BJ (cell line): ENCODE measurements at regions of chrX and their contacts with region 1.

Region 1: DNA sequence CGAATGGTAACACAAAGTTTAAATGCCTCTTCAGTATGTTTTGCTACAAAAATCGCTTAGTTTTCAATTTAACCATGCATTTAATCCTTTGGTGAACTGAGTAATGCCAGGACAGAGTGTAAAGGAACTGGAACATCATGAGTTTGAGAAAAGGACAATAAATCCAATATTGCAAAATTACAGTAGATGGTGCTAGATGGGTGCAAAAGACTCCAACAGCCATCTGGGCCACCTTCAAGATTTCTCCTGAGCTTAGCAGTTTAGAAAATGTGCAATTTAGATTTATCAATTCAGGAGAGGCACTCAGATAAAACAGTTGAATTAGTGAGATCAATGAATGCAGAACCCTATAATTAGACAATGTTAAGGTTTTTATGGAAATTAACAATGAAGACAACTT is 33.2 kb upstream of the MID1IP1 start:
- DNase-seq: no peak
- H3K4me3 ChIP-seq: no peak overlapping the region
- H3K27me3 ChIP-seq: no peaks in the 10 kb centered on the region
- CTCF ChIP-seq: peak; percentile 35

Region 2: DNA sequence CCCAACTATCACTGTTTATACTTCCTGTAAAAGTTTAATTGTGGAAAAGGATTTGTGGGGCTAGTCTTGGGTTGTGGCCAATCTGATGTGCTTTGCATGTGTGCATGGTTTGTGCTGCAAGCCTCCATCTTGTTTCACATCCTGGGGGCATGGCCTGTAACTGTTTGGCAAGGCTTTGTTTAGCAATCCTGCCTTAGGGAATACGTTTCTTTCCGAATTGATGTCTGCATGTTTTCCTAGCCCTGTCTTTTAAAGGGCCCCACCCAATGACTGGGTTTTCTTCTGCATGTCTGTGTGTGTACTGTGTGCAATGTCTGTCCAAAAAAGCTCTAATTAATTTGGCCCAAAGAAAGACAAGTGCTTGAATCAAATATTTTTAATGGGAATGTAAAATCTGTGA is 41.5 kb before region 1 on chrX:
- CTCF ChIA-PET with region 1: no interaction called
- POLR2A ChIA-PET with region 1: no interaction called
- DNase-seq: no peak
- H3K4me3 ChIP-seq: no peak overlapping the region
- H3K27me3 ChIP-seq: no peaks in the 10 kb centered on the region
- CTCF ChIP-seq: no peak

Region 3: DNA sequence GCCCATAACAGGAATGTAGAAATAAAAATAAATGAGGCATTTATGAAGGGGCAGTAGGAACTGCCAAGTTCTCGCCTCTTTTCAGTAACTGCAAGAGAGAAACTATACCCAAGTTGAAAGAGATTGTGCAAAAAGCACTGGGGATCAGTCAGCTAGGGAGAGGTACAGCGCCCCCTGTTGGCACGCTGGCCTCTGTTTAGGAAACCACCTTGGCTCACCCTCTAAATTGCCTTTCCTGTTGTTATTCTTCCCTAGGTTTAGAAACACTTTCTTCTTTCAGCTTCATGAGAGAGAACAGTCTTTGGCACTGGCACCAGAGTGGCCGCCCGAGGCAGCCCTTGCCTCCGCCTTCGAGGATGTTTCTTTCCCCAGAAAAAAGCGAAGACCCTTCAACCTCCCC is 381.7 kb after region 1 on chrX:
- CTCF ChIA-PET with region 1: interaction called, 15 read pairs
- POLR2A ChIA-PET with region 1: no interaction called
- DNase-seq: no peak
- H3K4me3 ChIP-seq: no peak overlapping the region
- H3K27me3 ChIP-seq: no peaks in the 10 kb centered on the region
- CTCF ChIP-seq: peak; percentile 77